ENCODE measurements at regions of chr17 and their contacts with region 1.

Region 1: DNA sequence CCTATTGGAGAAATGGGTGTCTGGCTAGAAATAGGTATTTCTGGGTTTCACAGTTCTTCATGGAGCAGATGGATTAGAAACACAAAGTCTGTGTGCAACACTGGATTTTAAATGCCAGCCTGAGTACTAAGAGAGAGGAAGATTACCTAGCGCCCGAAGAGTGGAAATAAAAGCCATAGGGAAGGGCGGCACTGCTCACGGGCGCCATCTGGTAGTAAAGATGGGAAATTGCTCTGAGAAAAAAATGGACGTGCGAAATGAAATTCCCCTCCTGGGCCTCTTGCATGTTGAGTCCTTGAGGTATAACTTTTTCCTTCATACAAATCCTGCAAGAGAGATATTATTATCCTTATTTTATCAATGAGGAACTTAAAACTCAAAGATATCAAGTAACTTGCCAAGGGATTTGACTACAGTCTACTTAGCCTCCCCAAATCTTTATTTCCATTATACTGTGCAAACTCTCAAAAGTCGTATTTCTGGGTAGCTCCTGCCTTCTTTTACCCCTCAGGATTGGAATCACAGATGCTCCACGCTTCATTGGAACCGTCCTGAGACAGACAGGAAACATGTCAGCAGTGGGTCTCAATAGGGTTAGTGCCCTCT is 72.8 kb downstream of the MMD start:
- DNase-seq: peak; percentile 26 to 54
- ATAC-seq: peak; percentile 71 to 87 (median 74)
- H3K4me3 ChIP-seq: no peak overlapping the region
- H3K27ac ChIP-seq: no peak overlapping the region
- H3K4me1 ChIP-seq: no peaks in the 10 kb centered on the region
- H3K27me3 ChIP-seq: no peaks in the 10 kb centered on the region
- CTCF ChIP-seq: peak; percentile 90

Region 2: GRCh38 chr17:54992797-54993639 is 355.8 kb before region 1 on chr17:
- intact Hi-C with region 1: loop called (anchors 2 to 5 kb)
- DNase-seq: no peak
- ATAC-seq: peak in 3 of 4 donors; percentile 46 to 73 (median 66)
- H3K4me3 ChIP-seq: no peak overlapping the region
- H3K27ac ChIP-seq: no peak overlapping the region
- H3K4me1 ChIP-seq: no peaks in the 10 kb centered on the region
- H3K27me3 ChIP-seq: no peaks in the 10 kb centered on the region
- CTCF ChIP-seq: peak; percentile 72

Region 3: GRCh38 chr17:55053855-55054254 is 295.0 kb before region 1 on chr17:
- intact Hi-C with region 1: loop called in 1 of 2 experiments (anchors 2 kb)
- DNase-seq: no peak
- ATAC-seq: no peak
- H3K4me3 ChIP-seq: no peak overlapping the region
- H3K27ac ChIP-seq: no peak overlapping the region
- H3K4me1 ChIP-seq: no peaks in the 10 kb centered on the region
- H3K27me3 ChIP-seq: no peaks in the 10 kb centered on the region
- CTCF ChIP-seq: peak; percentile 32

Region 4: GRCh38 chr17:55264645-55265298 is 84.1 kb before region 1 on chr17 and contains the start of gene HLF:
- intact Hi-C with region 1: no loop called
- DNase-seq: peak; percentile 88 to 92
- ATAC-seq: peak; percentile 95 to 98 (median 96)
- H3K4me3 ChIP-seq: peak within 1 kb of the TSS; percentile 74
- H3K27ac ChIP-seq: peak within 1 kb of the TSS; percentile 61
- H3K4me1 ChIP-seq: peaks cover 14% of the 10 kb centered on the region
- H3K27me3 ChIP-seq: no peaks in the 10 kb centered on the region
- CTCF ChIP-seq: no peak
- total RNA-seq, gene HLF: 3.7 to 5.0 (median 4.4) TPM

Region 5: DNA sequence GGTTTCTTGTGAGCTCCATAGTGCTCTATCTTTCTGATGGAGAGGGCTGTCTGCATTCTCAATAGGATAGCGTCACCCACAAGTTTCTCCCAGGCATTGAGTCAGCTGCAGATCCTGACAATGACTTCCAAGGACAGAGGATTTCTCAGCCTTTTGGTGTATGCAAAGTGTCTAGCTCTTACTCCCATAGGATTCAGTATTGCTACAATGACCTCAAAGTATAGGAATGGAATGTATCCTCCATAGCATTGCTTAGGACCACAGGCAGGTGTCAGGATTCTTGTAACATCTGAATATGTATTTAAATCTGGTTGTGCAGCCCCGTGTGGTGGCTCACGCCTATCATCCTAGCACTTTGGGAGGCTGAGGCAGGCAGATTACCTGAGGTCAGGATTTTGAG is 130.1 kb after region 1 on chr17:
- intact Hi-C with region 1: no loop called
- DNase-seq: no peak
- ATAC-seq: no peak
- H3K4me3 ChIP-seq: no peak overlapping the region
- H3K27ac ChIP-seq: no peak overlapping the region
- H3K4me1 ChIP-seq: no peaks in the 10 kb centered on the region
- H3K27me3 ChIP-seq: no peaks in the 10 kb centered on the region
- CTCF ChIP-seq: no peak

Measured in psoas muscle (tissue), 8 donors.